ENCODE measurements at regions of chr13 and their contacts with region 1.

Region 1: GRCh38 chr13:49996951-49997895 is at the start of gene TRIM13:
- DNase-seq: peak; percentile 94
- ATAC-seq: peak; percentile 89
- total RNA-seq, gene TRIM13: 22.3 TPM

Region 2: GRCh38 chr13:50911937-50912795 is 914.9 kb after region 1 on chr13:
- intact Hi-C with region 1: loop called (anchors 5 kb)
- DNase-seq: peak; percentile 91
- ATAC-seq: peak; percentile 54